Panc1 (cell line): ENCODE measurements at regions of chr10 and their contacts with region 1.

Region 1: DNA sequence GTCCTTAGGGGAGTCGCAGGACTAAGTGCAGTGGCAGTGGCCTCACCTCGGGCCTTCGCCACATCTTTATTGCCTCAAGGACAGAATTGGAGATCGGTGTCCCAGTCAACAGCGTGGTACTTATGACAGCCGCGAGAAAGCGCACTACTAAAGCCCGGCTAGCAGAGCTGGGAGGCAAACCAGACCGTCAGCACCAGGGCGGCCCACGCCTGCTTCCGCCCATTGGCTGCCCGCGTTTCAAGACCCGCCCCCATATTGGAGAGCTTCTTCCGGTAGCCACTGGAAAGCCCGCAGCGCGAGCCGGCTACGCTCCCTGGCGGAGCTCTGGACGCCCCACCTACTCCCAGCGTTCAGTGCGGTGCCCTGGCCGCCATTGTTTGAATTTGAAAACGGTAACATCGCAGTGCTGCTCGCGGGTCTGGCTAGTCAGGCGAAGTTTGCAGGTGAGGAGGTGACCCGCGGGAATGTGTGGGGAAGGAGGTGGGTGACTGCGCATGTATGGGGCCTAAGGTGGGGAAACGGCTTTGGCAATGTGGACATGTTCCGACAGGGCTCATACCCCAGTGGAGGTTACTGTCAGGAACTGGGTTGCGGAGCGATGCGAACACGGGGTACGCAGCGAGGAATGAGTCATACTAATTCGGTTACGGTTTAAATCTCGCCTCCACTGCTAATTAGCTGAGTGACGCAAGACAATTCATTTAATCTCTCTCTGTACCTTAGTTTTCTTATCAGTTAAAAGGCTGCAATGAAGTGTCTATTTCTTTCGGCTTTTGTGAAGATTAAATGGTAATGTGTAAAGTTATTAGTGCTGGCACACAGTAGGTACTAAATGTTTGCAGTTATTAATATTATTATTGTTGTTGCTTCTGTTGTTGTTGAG is at the start of gene KIF20B:
- DNase-seq: peak; percentile 87
- ATAC-seq: peak; percentile 100
- H3K4me3 ChIP-seq: peak within 1 kb of the TSS; percentile 70 to 86
- H3K27ac ChIP-seq: peak within 1 kb of the TSS; percentile 96
- H3K4me1 ChIP-seq: peaks cover 19% of the 10 kb centered on the region
- H3K27me3 ChIP-seq: no peaks in the 10 kb centered on the region
- CTCF ChIP-seq: peak; percentile 53
- total RNA-seq, gene KIF20B: 48.1 TPM

Region 2: DNA sequence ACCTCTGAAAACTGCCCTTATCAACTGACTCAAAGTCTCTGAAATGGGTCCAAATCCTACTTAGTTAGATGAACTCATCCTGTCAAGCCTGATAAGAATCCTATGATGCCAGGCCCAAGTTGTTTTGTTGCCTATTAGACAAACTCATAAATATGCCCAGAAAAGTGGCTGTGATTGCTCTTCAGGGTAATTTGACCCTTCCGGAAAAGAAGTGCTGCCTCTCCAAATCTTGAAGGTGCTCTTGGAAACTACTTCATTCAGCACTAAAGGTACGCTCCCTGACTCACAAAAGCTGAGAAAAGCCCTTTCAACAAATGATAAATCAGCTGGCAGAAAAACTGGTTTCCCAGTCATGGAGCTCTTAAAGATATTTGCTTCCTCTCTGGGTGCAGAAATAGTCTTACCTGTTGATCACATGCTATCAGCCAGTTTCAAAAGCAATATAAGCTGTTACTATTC is 280.4 kb before region 1 on chr10:
- CTCF ChIA-PET with region 1: no interaction called
- POLR2A ChIA-PET with region 1: no interaction called
- in situ Hi-C with region 1: no loop called
- intact Hi-C with region 1: loop called (anchors 5 kb)
- DNase-seq: no peak
- ATAC-seq: no peak
- H3K4me3 ChIP-seq: no peak overlapping the region
- H3K27ac ChIP-seq: no peak overlapping the region
- H3K4me1 ChIP-seq: peaks cover 3% of the 10 kb centered on the region; the same call in 1 of the 2 replicates
- H3K27me3 ChIP-seq: no peaks in the 10 kb centered on the region
- CTCF ChIP-seq: no peak

Region 3: GRCh38 chr10:89643431-89644331 is 57.8 kb before region 1 on chr10:
- CTCF ChIA-PET with region 1: no interaction called
- POLR2A ChIA-PET with region 1: interaction called, 6 read pairs
- in situ Hi-C with region 1: no loop called
- intact Hi-C with region 1: loop called (anchors 2 kb)
- DNase-seq: peak; percentile 82
- ATAC-seq: peak; percentile 90
- H3K4me3 ChIP-seq: peak overlapping the region; percentile 77 to 83
- H3K27ac ChIP-seq: peak overlapping the region; percentile 86
- H3K4me1 ChIP-seq: peaks cover 25% of the 10 kb centered on the region
- H3K27me3 ChIP-seq: no peaks in the 10 kb centered on the region
- CTCF ChIP-seq: no peak